ENCODE measurements at regions of chr14 and their contacts with region 1.

Region 1: GRCh38 chr14:65824285-65824977 is 411.9 kb downstream of the FUT8 start:
- DNase-seq: peak; percentile 34
- ATAC-seq: peak; percentile 95
- H3K4me3 ChIP-seq: no peak overlapping the region
- H3K27ac ChIP-seq: no peak overlapping the region
- H3K4me1 ChIP-seq: no peaks in the 10 kb centered on the region
- H3K27me3 ChIP-seq: peaks cover under 1 to 8% of the 10 kb centered on the region in 2 experiments; a peak in 3 of 4 replicates
- CTCF ChIP-seq: peak; percentile 89 to 95 (median 91); a peak in 5 of 6 replicates
- EP300 ChIP-seq: no peak
- POLR2A ChIP-seq: no peak
- RAD21 ChIP-seq: peak; percentile 92

Region 2: GRCh38 chr14:65164068-65164824 is 660.2 kb before region 1 on chr14:
- CTCF ChIA-PET with region 1: interaction called, 106 read pairs
- POLR2A ChIA-PET with region 1: no interaction called
- RAD21 ChIA-PET with region 1: interaction called, 42 read pairs
- SMC1A ChIA-PET with region 1: interaction called, 38 read pairs
- in situ Hi-C with region 1: loop called (anchors 5 kb)
- intact Hi-C with region 1: loop called (anchors 2 kb)
- DNase-seq: no peak
- ATAC-seq: peak; percentile 56
- H3K4me3 ChIP-seq: no peak overlapping the region
- H3K27ac ChIP-seq: no peak overlapping the region
- H3K4me1 ChIP-seq: peaks cover 29% of the 10 kb centered on the region
- H3K27me3 ChIP-seq: no peaks in the 10 kb centered on the region
- CTCF ChIP-seq: peak; percentile 51 to 77 (median 62); a peak in 5 of 6 replicates
- EP300 ChIP-seq: no peak
- POLR2A ChIP-seq: no peak
- RAD21 ChIP-seq: peak; percentile 96

Region 3: GRCh38 chr14:65222440-65222858 is 602.0 kb before region 1 on chr14:
- CTCF ChIA-PET with region 1: interaction called, 30 read pairs
- POLR2A ChIA-PET with region 1: no interaction called
- RAD21 ChIA-PET with region 1: interaction called, 8 read pairs
- SMC1A ChIA-PET with region 1: interaction called, 16 read pairs
- in situ Hi-C with region 1: loop called (anchors 10 kb)
- intact Hi-C with region 1: loop called (anchors 1 kb)
- DNase-seq: no peak
- ATAC-seq: peak; percentile 86
- H3K4me3 ChIP-seq: no peak overlapping the region
- H3K27ac ChIP-seq: peak overlapping the region; percentile 20; the same call in 1 of the 2 replicates
- H3K4me1 ChIP-seq: peaks cover 31% of the 10 kb centered on the region
- H3K27me3 ChIP-seq: no peaks in the 10 kb centered on the region
- CTCF ChIP-seq: peak; percentile 84 to 91 (median 84)
- EP300 ChIP-seq: no peak
- POLR2A ChIP-seq: no peak
- RAD21 ChIP-seq: peak; percentile 95

Region 4: GRCh38 chr14:65287264-65288131 is 536.9 kb before region 1 on chr14:
- CTCF ChIA-PET with region 1: interaction called, 26 read pairs
- POLR2A ChIA-PET with region 1: no interaction called
- RAD21 ChIA-PET with region 1: interaction called, 17 read pairs
- SMC1A ChIA-PET with region 1: interaction called, 17 read pairs
- in situ Hi-C with region 1: no loop called
- intact Hi-C with region 1: loop called (anchors 10 kb)
- DNase-seq: no peak
- ATAC-seq: peak; percentile 77
- H3K4me3 ChIP-seq: peak overlapping the region; percentile 53
- H3K27ac ChIP-seq: peak overlapping the region; percentile 98
- H3K4me1 ChIP-seq: peaks cover 77% of the 10 kb centered on the region
- H3K27me3 ChIP-seq: no peaks in the 10 kb centered on the region
- CTCF ChIP-seq: peak in 2 of 3 experiments; percentile 2 to 6; a peak in 1 of 6 replicates
- EP300 ChIP-seq: peak; percentile 51 to 55; a peak in 2 of 4 replicates
- POLR2A ChIP-seq: peak; percentile 75
- RAD21 ChIP-seq: no peak; the same call in 1 of the 2 replicates

Region 5: DNA sequence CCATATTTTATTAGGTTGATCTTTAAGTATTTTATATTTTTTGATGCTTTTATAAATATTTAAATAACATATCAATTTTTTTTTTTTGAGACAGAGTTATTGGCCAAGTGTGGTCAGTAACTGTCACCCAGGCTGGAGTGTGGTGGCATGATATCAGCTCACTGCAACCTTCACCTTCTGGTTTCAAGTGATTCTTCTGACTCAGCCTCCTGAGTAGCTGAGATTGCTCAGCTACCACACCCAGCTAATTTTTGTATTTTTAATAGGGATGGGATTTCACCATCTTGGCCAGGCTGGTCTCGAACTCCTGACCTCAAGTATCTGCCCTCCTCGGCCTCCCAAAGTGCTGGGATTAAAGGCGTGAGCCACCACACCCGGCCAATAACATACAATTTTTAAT is 340.8 kb before region 1 on chr14:
- CTCF ChIA-PET with region 1: interaction called, 20 read pairs
- POLR2A ChIA-PET with region 1: no interaction called
- RAD21 ChIA-PET with region 1: interaction called, 10 read pairs
- SMC1A ChIA-PET with region 1: interaction called, 3 read pairs
- in situ Hi-C with region 1: no loop called
- intact Hi-C with region 1: no loop called
- DNase-seq: no peak
- ATAC-seq: peak; percentile 74
- H3K4me3 ChIP-seq: no peak overlapping the region
- H3K27ac ChIP-seq: no peak overlapping the region
- H3K4me1 ChIP-seq: peaks cover 15% of the 10 kb centered on the region
- H3K27me3 ChIP-seq: no peaks in the 10 kb centered on the region
- CTCF ChIP-seq: no peak
- EP300 ChIP-seq: no peak
- POLR2A ChIP-seq: no peak
- RAD21 ChIP-seq: no peak

Region 6: DNA sequence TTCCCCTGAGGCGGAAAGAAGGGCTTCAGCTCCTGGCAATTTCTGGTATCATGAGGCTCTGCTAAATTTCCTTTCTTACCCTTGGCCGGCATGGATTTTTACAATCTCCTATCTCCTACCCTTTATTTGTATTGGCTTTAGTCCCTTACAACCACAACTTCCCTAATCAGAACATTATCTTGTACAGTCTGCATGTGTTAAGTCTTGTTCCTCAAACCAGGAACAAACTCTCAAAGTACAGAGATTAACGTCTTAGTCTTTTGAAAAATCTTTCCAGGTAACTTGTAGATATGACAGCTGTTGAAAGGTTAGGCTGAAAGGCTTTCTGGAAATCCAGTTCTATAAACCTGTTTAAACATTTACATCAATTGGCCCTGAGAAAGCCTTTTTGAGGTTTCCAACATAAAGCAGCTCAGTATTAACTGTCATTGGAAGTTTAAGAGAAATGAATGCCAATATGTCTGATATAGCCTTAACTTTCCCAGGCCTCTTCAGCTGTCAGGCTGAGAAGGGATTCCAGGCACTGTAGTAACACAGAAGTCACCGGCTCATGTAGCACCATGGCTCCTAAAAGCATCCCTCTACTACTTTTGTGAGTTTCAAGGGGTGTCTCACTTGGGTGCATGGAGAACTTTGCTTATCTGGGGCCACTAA is 51.4 kb before region 1 on chr14:
- CTCF ChIA-PET with region 1: no interaction called
- POLR2A ChIA-PET with region 1: no interaction called
- RAD21 ChIA-PET with region 1: interaction called, 4 read pairs
- SMC1A ChIA-PET with region 1: no interaction called
- in situ Hi-C with region 1: no loop called
- intact Hi-C with region 1: loop called (anchors 1 kb)
- DNase-seq: no peak
- ATAC-seq: no peak
- H3K4me3 ChIP-seq: no peak overlapping the region
- H3K27ac ChIP-seq: no peak overlapping the region
- H3K4me1 ChIP-seq: no peaks in the 10 kb centered on the region
- H3K27me3 ChIP-seq: no peaks in the 10 kb centered on the region
- CTCF ChIP-seq: no peak
- EP300 ChIP-seq: no peak
- POLR2A ChIP-seq: no peak
- RAD21 ChIP-seq: no peak

Region 7: DNA sequence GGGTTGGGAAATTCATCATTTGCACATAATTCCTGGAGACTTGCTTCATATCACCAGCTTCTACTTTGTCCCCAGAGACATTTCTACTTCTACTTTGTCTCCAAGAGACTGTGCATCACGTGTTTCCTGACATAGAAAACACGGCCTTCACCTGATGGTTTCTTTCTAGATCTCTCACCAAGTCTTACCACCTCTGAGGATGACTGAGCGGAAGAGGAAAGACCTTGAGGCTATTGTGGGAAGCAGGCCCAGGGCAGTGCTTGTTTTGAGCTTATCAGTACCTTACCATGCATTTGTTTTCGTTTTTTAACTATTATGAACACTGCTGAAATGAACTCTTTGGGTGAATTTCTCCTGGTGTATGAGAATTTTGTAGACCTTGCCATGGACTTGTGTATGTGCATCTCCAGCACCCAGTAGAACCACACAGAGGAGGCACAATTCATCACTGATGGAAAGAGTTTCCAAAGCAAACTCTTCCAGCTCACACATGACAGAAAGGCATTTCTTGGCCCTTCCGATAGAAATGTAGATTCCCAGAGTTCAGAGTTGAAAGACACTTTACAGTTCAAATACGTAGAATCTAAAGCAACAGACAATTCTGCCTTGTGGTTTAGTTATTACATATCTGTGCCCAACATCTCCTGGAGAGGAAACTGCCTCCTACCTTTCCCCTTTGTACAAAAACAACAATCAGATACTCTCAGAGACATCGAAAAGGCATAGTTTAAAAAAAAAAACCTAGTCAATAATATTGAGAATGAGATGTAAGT is 22.8 kb after region 1 on chr14:
- CTCF ChIA-PET with region 1: interaction called, 13 read pairs
- POLR2A ChIA-PET with region 1: no interaction called
- RAD21 ChIA-PET with region 1: no interaction called
- SMC1A ChIA-PET with region 1: interaction called, 3 read pairs
- in situ Hi-C with region 1: no loop called
- intact Hi-C with region 1: no loop called
- DNase-seq: peak; percentile 23
- ATAC-seq: no peak
- H3K4me3 ChIP-seq: no peak overlapping the region
- H3K27ac ChIP-seq: no peak overlapping the region
- H3K4me1 ChIP-seq: peaks cover 3% of the 10 kb centered on the region; the same call in 1 of the 2 replicates
- H3K27me3 ChIP-seq: no peaks in the 10 kb centered on the region; a peak in 1 of 4 replicates
- CTCF ChIP-seq: no peak
- EP300 ChIP-seq: no peak
- POLR2A ChIP-seq: no peak
- RAD21 ChIP-seq: no peak